HepG2 (cell line): ENCODE measurements at regions of chr10 and their contacts with region 1.

Region 1: GRCh38 chr10:100373298-100374136 is 26.5 kb downstream of the SCD start:
- DNase-seq: peak; percentile 99
- ATAC-seq: peak; percentile 88
- H3K4me3 ChIP-seq: peak overlapping the region; percentile 65 to 82 (median 74)
- H3K27ac ChIP-seq: peak overlapping the region; percentile 100
- H3K4me1 ChIP-seq: peaks cover 44% of the 10 kb centered on the region
- H3K27me3 ChIP-seq: peaks cover 0 to 4% of the 10 kb centered on the region in 2 experiments; a peak in 1 of 5 replicates
- CTCF ChIP-seq: no peak
- EP300 ChIP-seq: peak; percentile 67 to 85; a peak in 3 of 4 replicates
- POLR2A ChIP-seq: peak; percentile 19 to 87; a peak in 3 of 4 replicates
- RAD21 ChIP-seq: no peak; the same call in 1 of the 2 replicates

Region 2: GRCh38 chr10:100325158-100325557 is 48.4 kb before region 1 on chr10:
- CTCF ChIA-PET with region 1: no interaction called
- POLR2A ChIA-PET with region 1: no interaction called
- in situ Hi-C with region 1: no loop called
- intact Hi-C with region 1: no loop called
- DNase-seq: no peak
- ATAC-seq: no peak
- H3K4me3 ChIP-seq: no peak overlapping the region
- H3K27ac ChIP-seq: no peak overlapping the region
- H3K4me1 ChIP-seq: peaks cover 11% of the 10 kb centered on the region
- H3K27me3 ChIP-seq: peaks cover 0 to 10% of the 10 kb centered on the region in 2 experiments; a peak in 3 of 5 replicates
- CTCF ChIP-seq: no peak
- EP300 ChIP-seq: no peak
- POLR2A ChIP-seq: no peak
- RAD21 ChIP-seq: no peak

Region 3: GRCh38 chr10:100346765-100347567 is 26.6 kb before region 1 on chr10 and contains the start of gene SCD:
- CTCF ChIA-PET with region 1: interaction called, 4 read pairs
- POLR2A ChIA-PET with region 1: interaction called, 287 read pairs
- in situ Hi-C with region 1: no loop called
- intact Hi-C with region 1: loop called (anchors 1 kb)
- DNase-seq: peak; percentile 92
- ATAC-seq: peak; percentile 86
- H3K4me3 ChIP-seq: peak within 1 kb of the TSS; percentile 95 to 99 (median 95)
- H3K27ac ChIP-seq: peak within 1 kb of the TSS; percentile 82
- H3K4me1 ChIP-seq: peaks cover 63% of the 10 kb centered on the region
- H3K27me3 ChIP-seq: no peaks in the 10 kb centered on the region; a peak in 1 of 5 replicates
- CTCF ChIP-seq: peak; percentile 18; the same call in 1 of the 2 replicates
- EP300 ChIP-seq: peak in 1 of 2 experiments; percentile 38; a peak in 1 of 4 replicates
- POLR2A ChIP-seq: peak; percentile 91 to 92
- RAD21 ChIP-seq: no peak; the same call in 1 of the 2 replicates
- total RNA-seq, gene SCD: 338 and 492 TPM in 2 replicates

Region 4: GRCh38 chr10:100359529-100360150 is 13.9 kb before region 1 on chr10:
- CTCF ChIA-PET with region 1: no interaction called
- POLR2A ChIA-PET with region 1: interaction called, 107 read pairs
- in situ Hi-C with region 1: no loop called
- intact Hi-C with region 1: loop called (anchors 1 kb)
- DNase-seq: peak; percentile 79
- ATAC-seq: peak; percentile 56
- H3K4me3 ChIP-seq: no peak overlapping the region; a peak in 1 of 6 replicates
- H3K27ac ChIP-seq: peak overlapping the region; percentile 63
- H3K4me1 ChIP-seq: peaks cover 100% of the 10 kb centered on the region
- H3K27me3 ChIP-seq: no peaks in the 10 kb centered on the region
- CTCF ChIP-seq: no peak
- EP300 ChIP-seq: peak in 1 of 2 experiments; percentile 74; a peak in 1 of 4 replicates
- POLR2A ChIP-seq: peak in 1 of 2 experiments; percentile 1; a peak in 1 of 4 replicates
- RAD21 ChIP-seq: 0 out of 2 replicates have a peak, but pooled peaks have one; percentile 20

Region 5: GRCh38 chr10:100391163-100392002 is 17.9 kb after region 1 on chr10:
- CTCF ChIA-PET with region 1: no interaction called
- POLR2A ChIA-PET with region 1: interaction called, 26 read pairs
- in situ Hi-C with region 1: no loop called
- intact Hi-C with region 1: no loop called
- DNase-seq: no peak
- ATAC-seq: no peak
- H3K4me3 ChIP-seq: no peak overlapping the region
- H3K27ac ChIP-seq: no peak overlapping the region
- H3K4me1 ChIP-seq: peaks cover 48% of the 10 kb centered on the region
- H3K27me3 ChIP-seq: no peaks in the 10 kb centered on the region
- CTCF ChIP-seq: no peak
- EP300 ChIP-seq: no peak
- POLR2A ChIP-seq: no peak
- RAD21 ChIP-seq: no peak

Region 6: GRCh38 chr10:100419911-100420449 is 46.5 kb after region 1 on chr10:
- CTCF ChIA-PET with region 1: no interaction called
- POLR2A ChIA-PET with region 1: interaction called, 5 read pairs
- in situ Hi-C with region 1: no loop called
- intact Hi-C with region 1: loop called (anchors 10 kb)
- DNase-seq: no peak
- ATAC-seq: no peak
- H3K4me3 ChIP-seq: no peak overlapping the region
- H3K27ac ChIP-seq: no peak overlapping the region
- H3K4me1 ChIP-seq: peaks cover 13% of the 10 kb centered on the region
- H3K27me3 ChIP-seq: no peaks in the 10 kb centered on the region; a peak in 1 of 5 replicates
- CTCF ChIP-seq: no peak
- EP300 ChIP-seq: no peak
- POLR2A ChIP-seq: no peak
- RAD21 ChIP-seq: no peak

Region 7: GRCh38 chr10:100448951-100449350 is 75.4 kb after region 1 on chr10:
- CTCF ChIA-PET with region 1: no interaction called
- POLR2A ChIA-PET with region 1: no interaction called
- in situ Hi-C with region 1: no loop called
- intact Hi-C with region 1: no loop called
- DNase-seq: no peak
- ATAC-seq: no peak
- H3K4me3 ChIP-seq: no peak overlapping the region
- H3K27ac ChIP-seq: no peak overlapping the region
- H3K4me1 ChIP-seq: no peaks in the 10 kb centered on the region
- H3K27me3 ChIP-seq: no peaks in the 10 kb centered on the region; a peak in 1 of 5 replicates
- CTCF ChIP-seq: no peak
- EP300 ChIP-seq: no peak
- POLR2A ChIP-seq: no peak
- RAD21 ChIP-seq: no peak

Region 8: GRCh38 chr10:100579261-100580090 is 206.0 kb after region 1 on chr10:
- CTCF ChIA-PET with region 1: no interaction called
- POLR2A ChIA-PET with region 1: no interaction called
- in situ Hi-C with region 1: no loop called
- intact Hi-C with region 1: no loop called
- DNase-seq: no peak
- ATAC-seq: no peak
- H3K4me3 ChIP-seq: no peak overlapping the region
- H3K27ac ChIP-seq: no peak overlapping the region
- H3K4me1 ChIP-seq: no peaks in the 10 kb centered on the region
- H3K27me3 ChIP-seq: peaks cover 2 to 21% of the 10 kb centered on the region in 2 experiments; a peak in 3 of 5 replicates
- CTCF ChIP-seq: no peak
- EP300 ChIP-seq: no peak
- POLR2A ChIP-seq: no peak
- RAD21 ChIP-seq: no peak